Activated naive CD4-positive, alpha-beta T cell treated with anti-CD3 and anti-CD28 coated beads for 36 hours (primary cell): ENCODE measurements at regions of chr1 and their contacts with region 1.

Region 1: DNA sequence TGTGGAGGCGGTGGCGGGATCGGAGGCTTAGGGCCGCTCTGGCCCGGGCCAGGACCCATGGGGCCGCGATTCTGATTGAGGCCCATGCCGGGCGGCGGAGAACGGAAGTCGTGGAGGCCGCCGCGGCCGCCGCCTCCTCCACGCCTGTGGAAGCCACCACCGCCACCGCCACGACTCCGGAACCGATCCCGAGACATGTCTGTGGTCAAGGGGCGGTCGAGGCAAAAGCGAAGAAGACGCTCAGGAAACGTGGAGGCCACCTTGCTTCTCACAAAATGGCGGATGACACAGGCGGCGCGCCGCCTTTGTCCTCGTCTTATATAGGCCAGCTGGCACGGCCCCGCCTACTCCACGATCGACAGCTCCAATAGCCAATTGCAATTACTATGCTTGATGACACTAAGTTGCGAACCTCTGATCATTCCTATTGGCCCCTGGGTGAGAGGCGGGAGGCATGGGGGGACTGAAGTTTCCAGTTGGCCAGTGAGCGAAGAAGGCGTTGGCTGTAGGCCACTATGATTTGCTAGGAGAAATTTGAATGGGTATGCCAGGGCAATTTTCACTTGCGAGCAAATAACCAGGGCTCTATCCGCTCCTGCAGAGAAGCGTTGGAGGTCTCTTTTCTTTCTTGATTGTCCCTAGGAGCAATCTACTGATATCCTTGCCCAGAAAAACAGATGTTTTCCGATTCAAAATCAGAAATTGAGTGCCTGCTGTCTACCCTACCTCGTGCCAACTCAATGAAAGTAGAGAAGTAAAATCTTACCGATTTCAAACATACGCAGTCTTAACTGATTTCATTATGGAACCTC is at the start of gene SFPQ:
- DNase-seq: peak; percentile 98
- H3K4me3 Mint-ChIP-seq: peak within 1 kb of the TSS; percentile 96
- H3K27ac Mint-ChIP-seq: peak within 1 kb of the TSS; percentile 98
- H3K4me1 Mint-ChIP-seq: peaks cover 39% of the 10 kb centered on the region
- H3K27me3 Mint-ChIP-seq: no peaks in the 10 kb centered on the region
- total RNA-seq, gene SFPQ: 260 to 269 TPM

Region 2: GRCh38 chr1:34859446-34860200 is 333.4 kb before region 1 on chr1 and contains the start of gene SMIM12:
- CTCF ChIA-PET with region 1: no interaction called
- intact Hi-C with region 1: loop called (anchors 2 kb)
- DNase-seq: peak; percentile 96
- H3K4me3 Mint-ChIP-seq: peak within 1 kb of the TSS; percentile 98
- H3K27ac Mint-ChIP-seq: peak within 1 kb of the TSS; percentile 94
- H3K4me1 Mint-ChIP-seq: peaks cover 53% of the 10 kb centered on the region
- H3K27me3 Mint-ChIP-seq: no peaks in the 10 kb centered on the region
- total RNA-seq, gene SMIM12: 37.6 to 38.6 TPM

Region 3: GRCh38 chr1:35079003-35079930 is 113.8 kb before region 1 on chr1 and contains the start of gene ZMYM1:
- CTCF ChIA-PET with region 1: interaction called, 3 read pairs
- intact Hi-C with region 1: loop called (anchors 1 kb)
- DNase-seq: peak; percentile 95
- H3K4me3 Mint-ChIP-seq: peak within 1 kb of the TSS; percentile 92
- H3K27ac Mint-ChIP-seq: peak within 1 kb of the TSS; percentile 97
- H3K4me1 Mint-ChIP-seq: peaks cover 32% of the 10 kb centered on the region
- H3K27me3 Mint-ChIP-seq: peaks cover 3% of the 10 kb centered on the region
- total RNA-seq, gene ZMYM1: 7.3 to 7.9 TPM

Region 4: GRCh38 chr1:35287807-35288640 is 95.0 kb after region 1 on chr1:
- CTCF ChIA-PET with region 1: no interaction called
- intact Hi-C with region 1: loop called (anchors 5 kb)
- DNase-seq: peak; percentile 34
- H3K4me3 Mint-ChIP-seq: no peak overlapping the region
- H3K27ac Mint-ChIP-seq: no peak overlapping the region
- H3K4me1 Mint-ChIP-seq: peaks cover 36% of the 10 kb centered on the region
- H3K27me3 Mint-ChIP-seq: no peaks in the 10 kb centered on the region

Region 5: GRCh38 chr1:35451125-35451528 is 258.1 kb after region 1 on chr1:
- CTCF ChIA-PET with region 1: no interaction called
- intact Hi-C with region 1: no loop called
- DNase-seq: peak; percentile 90
- H3K4me3 Mint-ChIP-seq: no peak overlapping the region
- H3K27ac Mint-ChIP-seq: no peak overlapping the region
- H3K4me1 Mint-ChIP-seq: peaks cover 34% of the 10 kb centered on the region
- H3K27me3 Mint-ChIP-seq: no peaks in the 10 kb centered on the region

Region 6: GRCh38 chr1:35557292-35558063 is 364.4 kb after region 1 on chr1 and contains the starts of genes KIAA0319L and NCDN:
- CTCF ChIA-PET with region 1: no interaction called
- intact Hi-C with region 1: loop called (anchors 5 kb)
- DNase-seq: peak; percentile 98
- H3K4me3 Mint-ChIP-seq: peak within 1 kb of the TSS; percentile 95
- H3K27ac Mint-ChIP-seq: peak within 1 kb of the TSS; percentile 92
- H3K4me1 Mint-ChIP-seq: peaks cover 46% of the 10 kb centered on the region
- H3K27me3 Mint-ChIP-seq: no peaks in the 10 kb centered on the region
- total RNA-seq, gene KIAA0319L: 22.6 to 24.2 TPM
- total RNA-seq, gene NCDN: 12.1 to 13.4 TPM

Region 7: GRCh38 chr1:35930593-35931445 is 737.8 kb after region 1 on chr1 and contains the start of gene AGO3:
- CTCF ChIA-PET with region 1: no interaction called
- intact Hi-C with region 1: loop called (anchors 1 kb)
- DNase-seq: peak; percentile 92
- H3K4me3 Mint-ChIP-seq: peak within 1 kb of the TSS; percentile 94
- H3K27ac Mint-ChIP-seq: peak within 1 kb of the TSS; percentile 90
- H3K4me1 Mint-ChIP-seq: peaks cover 35% of the 10 kb centered on the region
- H3K27me3 Mint-ChIP-seq: no peaks in the 10 kb centered on the region
- total RNA-seq, gene AGO3: 25.1 to 28.2 TPM